ENCODE measurements at regions of chr6 and their contacts with region 1.

Region 1: GRCh38 chr6:37432916-37433656 is at the start of gene CMTR1:
- DNase-seq: peak; percentile 97
- H3K4me3 Mint-ChIP-seq: peak within 1 kb of the TSS; percentile 97
- H3K27ac Mint-ChIP-seq: peak within 1 kb of the TSS; percentile 97
- H3K4me1 Mint-ChIP-seq: peaks cover 36% of the 10 kb centered on the region
- H3K27me3 Mint-ChIP-seq: no peaks in the 10 kb centered on the region
- total RNA-seq, gene CMTR1: 70.9 to 71.3 TPM

Region 2: DNA sequence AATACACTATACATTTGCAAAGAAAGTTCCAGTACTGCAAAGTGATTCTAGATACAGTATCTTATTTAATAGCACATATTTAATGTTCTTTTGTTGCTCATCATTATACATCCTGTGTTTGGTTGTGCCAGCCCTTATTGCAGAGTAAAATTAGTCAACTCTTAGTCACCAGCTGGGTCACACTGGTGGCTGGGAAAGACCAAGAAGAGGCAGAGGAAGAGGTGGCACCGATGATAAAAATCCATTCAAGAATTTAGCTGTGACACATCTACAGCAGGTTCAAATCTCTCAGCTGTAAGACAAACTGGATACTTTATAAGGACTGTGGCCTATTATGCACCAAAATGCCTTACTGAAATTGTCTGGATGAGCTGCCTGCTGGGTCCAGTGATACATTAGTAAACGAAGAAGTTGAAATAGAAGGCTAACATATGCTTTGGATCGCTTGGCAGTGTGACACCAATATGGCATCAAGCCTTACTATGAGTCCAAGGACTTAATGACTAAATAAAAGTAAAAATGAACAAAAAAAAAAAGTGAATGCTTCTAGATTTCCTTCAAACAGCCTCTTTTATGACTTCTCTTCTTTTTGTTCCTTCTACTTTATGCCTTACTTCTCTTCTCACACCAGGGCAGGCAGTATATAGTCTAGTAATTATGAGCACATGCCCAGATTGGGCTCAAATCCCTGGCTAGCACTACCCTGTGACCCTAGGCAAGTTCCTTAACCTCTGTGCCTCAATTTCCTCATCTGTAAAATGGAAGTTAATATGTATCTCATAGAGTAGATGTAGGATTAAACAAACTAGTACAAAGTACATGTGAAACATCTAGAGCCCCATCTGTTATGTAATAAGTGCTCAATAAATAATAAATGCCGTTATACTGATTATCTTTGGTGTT is 108.7 kb before region 1 on chr6:
- CTCF ChIA-PET with region 1: interaction called, 3 read pairs
- intact Hi-C with region 1: loop called (anchors 2 kb)
- DNase-seq: peak; percentile 66
- H3K4me3 Mint-ChIP-seq: no peak overlapping the region
- H3K27ac Mint-ChIP-seq: no peak overlapping the region
- H3K4me1 Mint-ChIP-seq: peaks cover 20% of the 10 kb centered on the region
- H3K27me3 Mint-ChIP-seq: no peaks in the 10 kb centered on the region

Region 3: DNA sequence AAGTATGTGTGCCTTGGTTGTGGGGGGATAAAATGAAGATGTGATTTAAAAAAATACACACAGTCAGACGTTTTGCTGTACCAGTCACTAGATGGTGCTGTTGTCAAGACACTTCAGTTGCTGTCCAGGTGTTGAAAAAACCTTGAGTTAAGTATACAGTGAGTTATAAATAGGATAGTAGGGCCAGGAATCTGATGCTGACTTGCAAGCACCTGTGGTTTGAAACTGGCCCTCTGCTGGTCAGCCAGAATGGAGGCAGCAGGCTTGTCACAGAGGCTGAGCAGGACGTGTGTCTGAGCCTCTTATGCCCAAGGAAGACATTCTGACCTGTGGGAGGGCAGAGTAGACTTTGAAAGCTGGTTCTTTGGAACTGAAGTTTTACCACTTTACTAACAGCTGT is 51.5 kb before region 1 on chr6:
- CTCF ChIA-PET with region 1: interaction called, 4 read pairs
- intact Hi-C with region 1: loop called (anchors 1 kb)
- DNase-seq: peak; percentile 43
- H3K4me3 Mint-ChIP-seq: no peak overlapping the region
- H3K27ac Mint-ChIP-seq: no peak overlapping the region
- H3K4me1 Mint-ChIP-seq: no peaks in the 10 kb centered on the region
- H3K27me3 Mint-ChIP-seq: no peaks in the 10 kb centered on the region

Region 4: GRCh38 chr6:37516076-37516919 is 83.2 kb after region 1 on chr6:
- CTCF ChIA-PET with region 1: interaction called, 3 read pairs
- intact Hi-C with region 1: loop called (anchors 1 kb)
- DNase-seq: peak; percentile 98
- H3K4me3 Mint-ChIP-seq: peak overlapping the region; percentile 72
- H3K27ac Mint-ChIP-seq: peak overlapping the region; percentile 97
- H3K4me1 Mint-ChIP-seq: peaks cover 82% of the 10 kb centered on the region
- H3K27me3 Mint-ChIP-seq: no peaks in the 10 kb centered on the region

Region 5: GRCh38 chr6:37547564-37548061 is 114.5 kb after region 1 on chr6:
- CTCF ChIA-PET with region 1: no interaction called
- intact Hi-C with region 1: no loop called
- DNase-seq: no peak
- H3K4me3 Mint-ChIP-seq: no peak overlapping the region
- H3K27ac Mint-ChIP-seq: no peak overlapping the region
- H3K4me1 Mint-ChIP-seq: peaks cover 14% of the 10 kb centered on the region
- H3K27me3 Mint-ChIP-seq: no peaks in the 10 kb centered on the region

Region 6: DNA sequence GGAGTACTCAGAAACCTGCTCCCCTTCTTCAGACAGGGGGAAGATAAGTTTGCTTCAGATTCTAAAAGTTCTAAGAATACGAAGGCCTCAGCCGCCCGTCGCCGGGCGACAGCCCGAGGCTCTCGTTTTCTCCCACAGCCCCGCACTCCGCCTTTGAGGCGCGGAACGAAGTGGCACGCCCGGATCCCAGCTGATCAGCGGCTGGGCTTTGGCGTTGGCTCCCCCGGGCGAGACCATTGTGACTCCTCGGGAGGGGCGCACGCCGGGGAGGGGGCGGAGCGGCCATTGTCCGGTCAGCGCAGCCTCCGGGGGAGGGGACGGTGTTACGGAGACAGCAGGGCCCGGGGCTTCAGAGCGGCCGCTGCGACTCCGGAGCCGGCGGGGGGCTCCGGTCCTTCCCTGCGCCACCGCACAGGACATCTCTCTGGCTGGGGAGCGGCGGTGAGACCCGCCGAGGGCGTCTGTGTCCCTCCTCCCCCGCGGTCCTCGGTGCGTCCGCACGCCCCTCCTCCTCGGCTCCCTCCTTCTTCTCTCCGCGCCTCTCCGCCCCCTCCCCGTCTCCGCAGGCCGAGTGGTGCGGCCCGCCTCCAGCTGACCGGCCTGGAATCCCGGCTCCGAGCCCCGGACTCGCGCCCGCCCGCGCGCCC is 386.2 kb after region 1 on chr6 and contains the start of gene ZFAND3:
- CTCF ChIA-PET with region 1: no interaction called
- intact Hi-C with region 1: loop called (anchors 1 kb)
- DNase-seq: peak; percentile 95
- H3K4me3 Mint-ChIP-seq: peak within 1 kb of the TSS; percentile 92
- H3K27ac Mint-ChIP-seq: peak within 1 kb of the TSS; percentile 98
- H3K4me1 Mint-ChIP-seq: peaks cover 52% of the 10 kb centered on the region
- H3K27me3 Mint-ChIP-seq: no peaks in the 10 kb centered on the region
- total RNA-seq, gene ZFAND3: 33.6 to 35.3 TPM

Measured in activated naive CD4-positive, alpha-beta T cell treated with anti-CD3 and anti-CD28 coated beads for 36 hours (primary cell).